HEK293 (cell line): ENCODE measurements at regions of chr14 and their contacts with region 1.

Region 1: GRCh38 chr14:76918751-76919543 is 92.7 kb downstream of the LRRC74A start:
- H3K4me3 ChIP-seq: no peak overlapping the region
- H3K27ac ChIP-seq: peak overlapping the region; percentile 95
- H3K4me1 ChIP-seq: peaks cover 32% of the 10 kb centered on the region
- CTCF ChIP-seq: peak; percentile 22; the same call in 1 of the 2 replicates

Region 2: DNA sequence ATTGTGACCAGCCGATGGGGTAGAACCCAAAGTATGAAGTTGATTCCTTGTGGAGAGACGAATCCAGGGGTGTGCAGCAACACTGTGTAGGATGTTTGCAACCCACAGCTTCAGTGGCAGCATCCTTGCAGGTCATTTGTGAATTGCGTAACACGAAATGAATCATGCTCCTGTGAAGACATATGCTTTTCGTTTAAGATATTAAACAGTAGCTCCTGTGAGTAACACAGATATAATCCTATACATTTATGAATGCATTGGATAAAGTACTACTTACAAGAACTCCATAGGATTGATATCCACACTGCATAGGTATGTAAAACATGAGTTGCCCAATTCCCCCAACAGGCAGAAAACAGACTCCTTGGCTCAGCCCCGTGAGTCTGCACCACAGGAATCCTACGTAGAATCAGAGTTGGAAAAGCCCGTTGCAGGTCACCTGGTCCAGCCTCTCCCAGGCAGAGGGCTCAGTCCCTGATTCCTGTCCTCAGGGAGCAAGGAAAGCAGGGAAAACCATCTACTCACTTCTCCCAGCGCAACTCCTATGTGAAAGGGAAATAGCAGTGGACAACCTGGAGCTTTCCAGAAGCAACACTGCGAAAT is 691.4 kb before region 1 on chr14:
- CTCF ChIA-PET with region 1: no interaction called
- POLR2A ChIA-PET with region 1: no interaction called
- H3K4me3 ChIP-seq: no peak overlapping the region
- H3K27ac ChIP-seq: no peak overlapping the region
- H3K4me1 ChIP-seq: no peaks in the 10 kb centered on the region
- CTCF ChIP-seq: no peak

Region 3: GRCh38 chr14:76947078-76947837 is 28.3 kb after region 1 on chr14:
- CTCF ChIA-PET with region 1: interaction called, 11 read pairs
- POLR2A ChIA-PET with region 1: interaction called, 5 read pairs
- H3K4me3 ChIP-seq: no peak overlapping the region
- H3K27ac ChIP-seq: peak overlapping the region; percentile 93
- H3K4me1 ChIP-seq: peaks cover 23% of the 10 kb centered on the region
- CTCF ChIP-seq: peak; percentile 58; the same call in 1 of the 2 replicates

Region 4: DNA sequence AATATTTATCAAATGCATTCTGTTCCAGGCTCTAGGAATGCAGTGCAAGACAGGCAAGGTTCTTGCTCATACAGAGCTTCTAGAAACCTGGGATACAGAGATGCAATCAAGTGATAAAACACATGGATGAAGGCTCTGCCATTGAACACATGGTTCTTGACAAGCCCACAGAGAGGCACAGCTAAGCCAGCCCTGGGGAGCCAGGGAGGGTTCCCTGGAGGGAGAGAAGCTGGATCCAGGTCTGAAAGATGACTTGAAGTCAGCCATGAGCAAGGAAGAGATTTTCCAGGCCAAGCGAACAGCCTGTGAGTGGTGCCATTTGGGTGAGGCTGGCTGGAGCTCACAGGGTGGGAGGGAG is 43.3 kb after region 1 on chr14:
- CTCF ChIA-PET with region 1: interaction called, 12 read pairs
- POLR2A ChIA-PET with region 1: interaction called, 10 read pairs
- H3K4me3 ChIP-seq: peak overlapping the region; percentile 11
- H3K27ac ChIP-seq: peak overlapping the region; percentile 87
- H3K4me1 ChIP-seq: peaks cover 20% of the 10 kb centered on the region
- CTCF ChIP-seq: no peak

Region 5: GRCh38 chr14:77059276-77059915 is 140.4 kb after region 1 on chr14:
- CTCF ChIA-PET with region 1: interaction called, 83 read pairs
- POLR2A ChIA-PET with region 1: no interaction called
- H3K4me3 ChIP-seq: no peak overlapping the region
- H3K27ac ChIP-seq: no peak overlapping the region
- H3K4me1 ChIP-seq: no peaks in the 10 kb centered on the region
- CTCF ChIP-seq: no peak

Region 6: DNA sequence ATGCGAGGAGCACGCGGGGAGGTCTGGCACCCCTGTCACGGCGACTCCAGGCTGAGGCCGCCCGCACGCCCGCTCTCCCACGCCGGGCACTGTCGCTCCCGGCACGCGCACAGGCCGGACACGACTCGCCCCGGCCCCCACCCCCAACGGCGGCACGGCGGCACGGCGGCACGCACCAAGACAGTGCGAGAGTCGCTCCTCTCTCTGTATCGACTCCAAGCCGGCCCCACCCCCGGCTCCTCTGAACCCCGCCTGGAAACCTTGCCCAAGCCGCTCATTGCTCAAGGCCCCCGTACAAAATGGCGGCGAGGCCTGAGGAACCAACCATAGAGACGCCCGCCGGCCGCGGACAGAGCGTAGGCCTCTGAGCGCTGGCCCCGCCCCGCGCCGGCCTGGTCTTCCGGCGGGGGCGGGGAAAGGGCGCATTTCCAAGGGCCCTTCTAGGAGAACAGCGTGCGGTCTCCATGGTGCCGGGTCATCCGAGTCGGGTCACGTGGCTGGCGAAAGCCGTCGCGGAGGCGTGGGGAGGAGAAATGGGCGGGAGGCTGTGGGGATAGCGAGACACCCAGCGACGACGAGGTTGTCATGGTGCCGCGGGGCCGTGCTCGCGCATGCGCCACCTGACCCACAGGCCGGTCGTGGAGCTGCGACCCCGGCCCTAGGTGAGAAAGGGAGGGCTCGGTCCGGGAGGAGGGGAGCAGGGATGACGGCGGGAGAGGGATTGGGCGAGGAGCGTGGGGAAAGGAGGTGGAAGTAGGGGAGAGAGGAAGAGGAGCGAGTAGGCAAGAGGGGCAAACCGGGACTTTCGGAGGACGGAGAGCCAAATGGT is 179.0 kb after region 1 on chr14 and contains the start of gene CIPC:
- CTCF ChIA-PET with region 1: interaction called, 12 read pairs
- POLR2A ChIA-PET with region 1: no interaction called
- H3K4me3 ChIP-seq: peak within 1 kb of the TSS; percentile 88
- H3K27ac ChIP-seq: peak within 1 kb of the TSS; percentile 87
- H3K4me1 ChIP-seq: peaks cover 18% of the 10 kb centered on the region
- CTCF ChIP-seq: peak; percentile 41; the same call in 1 of the 2 replicates